Caco-2 (cell line): ENCODE measurements at regions of chr6 and their contacts with region 1.

Region 1: DNA sequence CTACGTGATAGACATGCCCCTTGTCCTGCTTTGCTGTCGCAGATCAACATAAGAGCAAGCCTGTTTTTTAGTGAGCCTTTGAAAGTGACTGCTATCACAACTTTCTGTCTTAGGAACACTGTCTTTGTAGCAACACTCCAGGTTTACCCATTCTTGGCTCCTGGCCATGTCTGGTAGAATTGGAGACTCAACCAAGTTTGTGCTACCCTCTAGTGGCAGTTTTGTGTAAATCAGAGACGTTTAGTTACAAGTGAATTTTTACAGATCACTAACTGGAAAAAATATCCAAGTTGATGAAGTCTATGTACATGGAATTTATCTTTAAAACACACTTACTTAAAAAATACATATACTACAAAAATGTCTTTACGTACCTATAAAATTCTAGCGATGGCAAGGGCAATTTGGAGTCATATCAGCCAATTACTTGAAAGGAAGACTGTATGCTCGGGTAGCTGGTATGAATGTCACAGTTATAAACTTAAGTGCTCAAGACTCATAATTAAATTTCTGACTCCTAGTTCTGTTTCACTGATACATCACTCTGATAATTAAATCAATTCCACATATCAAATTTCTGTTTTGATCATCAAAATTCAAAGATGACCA is 101.4 kb downstream of the ADGB start:
- DNase-seq: peak; percentile 36 to 54
- H3K4me3 ChIP-seq: no peak overlapping the region
- H3K4me3 Mint-ChIP-seq: no peak overlapping the region
- H3K27ac Mint-ChIP-seq: no peak overlapping the region
- H3K4me1 ChIP-seq: no peaks in the 10 kb centered on the region
- H3K4me1 Mint-ChIP-seq: no peaks in the 10 kb centered on the region
- H3K27me3 ChIP-seq: no peaks in the 10 kb centered on the region
- H3K27me3 Mint-ChIP-seq: peaks cover 10% of the 10 kb centered on the region
- CTCF ChIP-seq: peak; percentile 50 to 74

Region 2: DNA sequence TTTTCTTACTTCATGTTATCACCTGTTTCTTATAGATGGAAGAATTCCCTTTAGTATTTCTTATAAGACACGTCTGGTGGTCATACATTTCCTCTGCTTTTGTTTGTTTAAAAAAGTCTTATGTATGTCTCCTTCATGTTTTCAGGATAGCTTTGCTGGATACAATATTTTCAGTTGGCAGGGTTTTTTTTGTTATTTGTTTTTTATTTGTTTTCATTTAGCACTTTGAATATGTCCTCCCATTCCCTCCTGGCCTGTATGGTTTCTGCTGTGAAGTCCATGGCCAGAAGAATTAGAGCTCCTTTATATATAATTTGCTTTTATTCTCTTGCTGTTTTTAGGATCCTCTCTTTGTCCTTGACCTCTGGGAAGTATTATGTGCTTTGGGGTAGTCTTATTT is 239.2 kb before region 1 on chr6:
- CTCF ChIA-PET with region 1: no interaction called
- POLR2A ChIA-PET with region 1: no interaction called
- intact Hi-C with region 1: loop called (anchors 10 kb)
- DNase-seq: no peak
- H3K4me3 ChIP-seq: no peak overlapping the region
- H3K4me3 Mint-ChIP-seq: no peak overlapping the region
- H3K27ac Mint-ChIP-seq: no peak overlapping the region
- H3K4me1 ChIP-seq: no peaks in the 10 kb centered on the region
- H3K4me1 Mint-ChIP-seq: no peaks in the 10 kb centered on the region
- H3K27me3 ChIP-seq: no peaks in the 10 kb centered on the region
- H3K27me3 Mint-ChIP-seq: peaks cover 3% of the 10 kb centered on the region
- CTCF ChIP-seq: no peak

Region 3: GRCh38 chr6:146543211-146543939 is 156.8 kb before region 1 on chr6 and contains the start of gene RAB32:
- CTCF ChIA-PET with region 1: no interaction called
- POLR2A ChIA-PET with region 1: no interaction called
- intact Hi-C with region 1: loop called (anchors 1 kb)
- DNase-seq: peak; percentile 86 to 94
- H3K4me3 ChIP-seq: peak within 1 kb of the TSS; percentile 87
- H3K4me3 Mint-ChIP-seq: peak within 1 kb of the TSS; percentile 93
- H3K27ac Mint-ChIP-seq: peak within 1 kb of the TSS; percentile 91
- H3K4me1 ChIP-seq: peaks cover 8% of the 10 kb centered on the region
- H3K4me1 Mint-ChIP-seq: no peaks in the 10 kb centered on the region
- H3K27me3 ChIP-seq: no peaks in the 10 kb centered on the region
- H3K27me3 Mint-ChIP-seq: no peaks in the 10 kb centered on the region
- CTCF ChIP-seq: peak; percentile 55 to 60
- total RNA-seq, gene RAB32: 9.0 and 11.8 TPM in 2 replicates

Region 4: DNA sequence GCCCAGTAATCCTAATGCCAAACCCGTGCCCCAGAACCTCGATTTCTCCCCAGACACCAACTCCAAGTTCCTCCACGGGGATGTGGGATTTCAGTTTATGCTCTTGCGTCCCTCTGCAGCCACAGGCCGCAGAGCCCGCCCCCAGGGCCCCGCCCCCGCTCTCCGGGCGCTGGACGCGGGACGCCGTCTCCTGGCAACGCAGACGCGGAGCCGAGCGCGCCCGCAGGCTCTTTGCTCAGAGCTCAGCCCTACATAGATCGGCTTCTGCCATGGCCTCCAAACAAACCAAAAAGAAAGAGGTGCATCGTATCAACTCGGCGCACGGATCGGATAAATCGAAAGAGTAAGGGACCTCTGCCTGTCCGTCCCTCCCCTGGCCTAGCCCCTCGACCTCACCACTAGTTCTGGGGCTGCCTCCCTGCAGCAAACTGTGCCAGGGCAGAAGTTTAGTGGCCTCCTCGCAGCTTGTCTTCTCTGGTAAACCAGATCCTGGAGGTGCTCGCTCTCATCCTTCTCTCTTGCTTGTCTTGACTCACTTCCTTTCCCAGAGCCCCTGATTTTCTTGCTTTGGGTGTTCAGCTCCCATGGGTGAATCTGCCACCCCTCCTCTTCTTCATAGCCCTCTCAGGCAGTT is 101.3 kb before region 1 on chr6 and contains the start of gene ADGB:
- CTCF ChIA-PET with region 1: no interaction called
- POLR2A ChIA-PET with region 1: no interaction called
- intact Hi-C with region 1: loop called (anchors 5 kb)
- DNase-seq: peak; percentile 51 to 75
- H3K4me3 ChIP-seq: peak within 1 kb of the TSS; percentile 33
- H3K4me3 Mint-ChIP-seq: peak within 1 kb of the TSS; percentile 58
- H3K27ac Mint-ChIP-seq: peak within 1 kb of the TSS; percentile 16
- H3K4me1 ChIP-seq: no peaks in the 10 kb centered on the region
- H3K4me1 Mint-ChIP-seq: peaks cover 12% of the 10 kb centered on the region
- H3K27me3 ChIP-seq: no peaks in the 10 kb centered on the region
- H3K27me3 Mint-ChIP-seq: peaks cover 17% of the 10 kb centered on the region
- CTCF ChIP-seq: no peak
- total RNA-seq, gene ADGB: not detected in 2 replicates